A673 (cell line): ENCODE measurements at regions of chr7 and their contacts with region 1.

Region 1: DNA sequence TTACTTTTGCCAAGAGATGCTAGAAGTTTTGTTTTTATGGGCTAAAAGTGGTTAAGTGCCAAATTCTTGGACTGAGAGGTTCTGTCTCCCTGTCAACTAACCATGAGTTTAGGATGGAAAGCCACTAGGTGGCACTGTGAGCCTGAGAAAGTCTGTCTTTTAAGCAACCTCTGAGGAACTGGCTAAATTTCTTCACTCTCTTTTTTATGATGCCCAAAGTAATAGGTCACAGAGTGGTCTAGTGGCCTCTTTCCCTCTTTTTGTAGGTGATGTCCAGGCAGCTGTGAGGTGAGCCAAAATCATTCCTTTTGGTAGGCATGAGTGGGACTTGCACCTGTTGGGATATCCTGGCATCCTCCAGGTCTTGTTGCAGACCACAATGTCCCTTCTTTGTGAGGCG is 56.8 kb downstream of the SND1 start:
- DNase-seq: peak; percentile 79
- H3K4me3 ChIP-seq: no peak overlapping the region
- H3K27ac ChIP-seq: no peak overlapping the region
- H3K4me1 ChIP-seq: no peaks in the 10 kb centered on the region
- H3K27me3 ChIP-seq: no peaks in the 10 kb centered on the region
- CTCF ChIP-seq: peak; percentile 76

Region 2: GRCh38 chr7:127619681-127620405 is 88.9 kb before region 1 on chr7:
- CTCF ChIA-PET with region 1: no interaction called
- POLR2A ChIA-PET with region 1: no interaction called
- intact Hi-C with region 1: no loop called
- DNase-seq: no peak
- H3K4me3 ChIP-seq: no peak overlapping the region
- H3K27ac ChIP-seq: no peak overlapping the region
- H3K4me1 ChIP-seq: no peaks in the 10 kb centered on the region
- H3K27me3 ChIP-seq: peaks cover 96% of the 10 kb centered on the region
- CTCF ChIP-seq: no peak

Region 3: DNA sequence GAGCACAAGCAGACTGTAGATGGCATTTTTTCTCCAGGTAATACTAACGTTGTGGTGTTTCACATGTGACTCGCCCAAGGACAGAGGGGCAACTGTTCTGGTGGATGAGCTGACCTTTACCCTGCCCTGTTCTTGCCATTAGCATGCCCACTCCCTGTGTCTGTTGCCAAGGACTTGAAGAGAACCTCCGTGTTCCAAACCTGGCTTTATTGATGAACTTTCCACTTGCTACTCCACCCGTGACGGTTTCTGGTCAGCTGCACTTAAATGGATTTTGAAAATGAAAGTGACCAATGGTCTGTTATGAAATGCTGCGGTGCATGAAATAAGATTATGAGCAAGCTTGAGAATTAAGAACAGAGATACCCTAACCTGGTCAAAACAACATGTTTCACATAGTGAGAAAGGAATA is 292.1 kb after region 1 on chr7:
- CTCF ChIA-PET with region 1: no interaction called
- POLR2A ChIA-PET with region 1: no interaction called
- intact Hi-C with region 1: no loop called
- DNase-seq: no peak
- H3K4me3 ChIP-seq: no peak overlapping the region
- H3K27ac ChIP-seq: no peak overlapping the region
- H3K4me1 ChIP-seq: no peaks in the 10 kb centered on the region
- H3K27me3 ChIP-seq: no peaks in the 10 kb centered on the region
- CTCF ChIP-seq: no peak

Region 4: DNA sequence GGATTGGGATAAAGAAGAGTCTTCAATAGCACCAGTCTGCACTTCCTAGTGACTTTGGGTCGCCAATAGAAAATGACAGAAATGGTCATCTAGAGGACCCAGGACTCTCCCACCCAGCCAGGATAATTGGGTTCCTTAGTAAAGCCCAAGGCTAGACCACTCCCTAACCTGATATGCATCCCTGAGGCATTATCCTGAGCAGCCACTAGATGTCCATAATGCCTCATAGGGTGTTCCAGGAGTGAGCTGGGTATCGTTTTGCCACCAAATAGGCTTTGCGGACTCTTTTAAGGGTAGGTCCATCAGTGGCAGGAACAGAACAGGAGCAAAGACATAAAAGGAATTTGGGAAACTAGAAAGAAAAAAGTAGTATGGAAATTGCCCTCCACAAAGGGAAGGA is 326.9 kb after region 1 on chr7:
- CTCF ChIA-PET with region 1: no interaction called
- POLR2A ChIA-PET with region 1: no interaction called
- intact Hi-C with region 1: loop called (anchors 2 kb)
- DNase-seq: peak; percentile 55
- H3K4me3 ChIP-seq: no peak overlapping the region
- H3K27ac ChIP-seq: no peak overlapping the region
- H3K4me1 ChIP-seq: no peaks in the 10 kb centered on the region
- H3K27me3 ChIP-seq: no peaks in the 10 kb centered on the region
- CTCF ChIP-seq: peak; percentile 63

Region 5: DNA sequence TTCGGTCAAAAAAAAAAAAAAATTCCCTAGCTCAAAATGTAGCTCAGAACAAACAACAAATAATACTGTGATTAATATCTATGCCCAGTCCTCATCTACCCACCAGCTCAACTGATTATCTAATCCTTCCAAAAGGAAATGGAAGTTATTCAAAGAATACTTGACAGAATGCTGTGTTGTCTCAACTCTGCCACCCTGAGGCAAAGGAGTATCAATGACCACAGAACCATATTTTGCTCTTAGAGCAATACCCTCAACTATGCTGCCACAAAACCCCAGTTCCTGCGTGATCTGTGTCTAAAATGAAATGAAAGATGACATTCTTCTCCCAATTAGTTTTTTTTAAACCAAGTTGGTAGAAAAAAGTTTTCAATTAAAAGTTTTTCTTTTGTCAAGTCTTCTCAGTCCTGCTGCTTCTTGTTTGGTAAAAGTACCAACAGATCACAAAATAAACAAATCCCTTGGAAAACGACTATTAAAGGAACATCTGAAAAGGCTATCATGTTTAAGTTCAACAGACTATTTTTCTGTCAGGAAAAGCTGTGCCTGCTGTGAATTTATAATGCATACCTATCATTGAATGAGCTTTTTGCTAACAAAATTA is 613.4 kb after region 1 on chr7:
- CTCF ChIA-PET with region 1: interaction called, 3 read pairs
- POLR2A ChIA-PET with region 1: no interaction called
- intact Hi-C with region 1: loop called (anchors 10 kb)
- DNase-seq: peak; percentile 73
- H3K4me3 ChIP-seq: no peak overlapping the region
- H3K27ac ChIP-seq: no peak overlapping the region
- H3K4me1 ChIP-seq: no peaks in the 10 kb centered on the region
- H3K27me3 ChIP-seq: no peaks in the 10 kb centered on the region
- CTCF ChIP-seq: peak; percentile 70